CD4-positive, alpha-beta memory T cell (primary cell): ENCODE measurements at regions of chr12 and their contacts with region 1.

Region 1: DNA sequence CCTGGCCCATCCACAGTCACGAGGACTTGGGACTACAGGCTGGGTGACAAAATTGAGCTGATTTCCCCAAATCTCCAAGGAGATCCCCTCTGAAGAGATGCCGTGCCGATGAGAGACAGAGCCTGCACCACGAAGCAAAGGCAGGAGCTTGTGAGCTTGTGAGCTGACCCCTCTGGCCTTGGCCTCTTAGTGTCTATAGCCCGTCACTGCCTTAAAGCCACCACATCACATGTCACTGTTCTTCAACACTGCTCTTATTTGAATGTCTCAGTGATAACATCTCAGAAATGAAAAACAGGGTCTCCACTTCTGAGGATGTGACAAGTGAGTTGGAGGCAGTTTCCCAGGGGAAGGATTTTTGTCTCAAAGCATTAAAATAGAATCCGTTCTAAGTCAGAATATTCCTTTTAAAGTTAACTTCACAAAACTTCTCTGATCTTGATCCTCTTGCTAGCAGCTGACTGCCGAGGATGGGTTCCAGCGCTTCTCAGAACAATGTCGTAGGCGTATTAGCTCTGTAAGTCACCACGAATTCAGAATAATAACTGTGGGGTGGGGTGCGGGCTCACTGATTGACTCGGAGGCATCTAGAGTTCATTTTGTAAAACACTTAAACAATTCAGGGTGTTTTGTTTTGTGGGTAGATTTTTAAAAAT is 37.5 kb downstream of the CHST11 start:
- DNase-seq: peak; percentile 29 to 76 (median 42)
- H3K4me3 ChIP-seq: peak overlapping the region in 1 of 2 donors; percentile 32
- H3K4me3 Mint-ChIP-seq: peak overlapping the region; percentile 66 to 94 (median 84)
- H3K27ac ChIP-seq: peak overlapping the region; percentile 50
- H3K27ac Mint-ChIP-seq: peak overlapping the region; percentile 88 to 99 (median 94)
- H3K4me1 ChIP-seq: peaks cover 93% of the 10 kb centered on the region
- H3K4me1 Mint-ChIP-seq: peaks cover 77 to 96% (median 86%) of the 10 kb centered on the region in 4 donors
- H3K27me3 ChIP-seq: no peaks in the 10 kb centered on the region
- H3K27me3 Mint-ChIP-seq: no peaks in the 10 kb centered on the region

Region 2: GRCh38 chr12:104026841-104027599 is 467.2 kb before region 1 on chr12:
- CTCF ChIA-PET with region 1: no interaction called
- POLR2A ChIA-PET with region 1: no interaction called
- intact Hi-C with region 1: no loop called
- DNase-seq: no peak
- H3K4me3 ChIP-seq: no peak overlapping the region
- H3K4me3 Mint-ChIP-seq: no peak overlapping the region
- H3K27ac ChIP-seq: no peak overlapping the region
- H3K27ac Mint-ChIP-seq: no peak overlapping the region
- H3K4me1 ChIP-seq: no peaks in the 10 kb centered on the region
- H3K4me1 Mint-ChIP-seq: no peaks in the 10 kb centered on the region
- H3K27me3 ChIP-seq: no peaks in the 10 kb centered on the region
- H3K27me3 Mint-ChIP-seq: peaks cover 18 to 19% of the 10 kb centered on the region in 2 donors

Region 3: GRCh38 chr12:104510145-104510872 is 16.0 kb after region 1 on chr12:
- CTCF ChIA-PET with region 1: no interaction called
- POLR2A ChIA-PET with region 1: interaction called, 5 read pairs
- intact Hi-C with region 1: loop called (anchors 2 kb)
- DNase-seq: no peak
- H3K4me3 ChIP-seq: no peak overlapping the region
- H3K4me3 Mint-ChIP-seq: peak overlapping the region in 6 of 8 donors; percentile 4 to 54 (median 42)
- H3K27ac ChIP-seq: no peak overlapping the region
- H3K27ac Mint-ChIP-seq: peak overlapping the region; percentile 9 to 82 (median 15)
- H3K4me1 ChIP-seq: peaks cover 66% of the 10 kb centered on the region
- H3K4me1 Mint-ChIP-seq: peaks cover 58 to 90% (median 75%) of the 10 kb centered on the region in 4 donors
- H3K27me3 ChIP-seq: no peaks in the 10 kb centered on the region
- H3K27me3 Mint-ChIP-seq: no peaks in the 10 kb centered on the region